ENCODE measurements at regions of chr6 and their contacts with region 1.

Region 1: GRCh38 chr6:26342106-26343004 is 22.6 kb upstream of the BTN3A2 start:
- DNase-seq: peak in 1 of 35 experiments; percentile 27
- ATAC-seq: peak; percentile 14 to 43 (median 28)
- H3K4me3 ChIP-seq: peak overlapping the region in 1 of 2 donors; percentile 33
- H3K4me3 Mint-ChIP-seq: peak overlapping the region; percentile 72 to 82 (median 77)
- H3K27ac ChIP-seq: no peak overlapping the region
- H3K27ac Mint-ChIP-seq: peak overlapping the region in 1 of 2 donors; percentile 59
- H3K4me1 ChIP-seq: peaks cover 0 to 14% of the 10 kb centered on the region in 2 experiments
- H3K4me1 Mint-ChIP-seq: peaks cover 4 to 11% (median 8%) of the 10 kb centered on the region in 3 donors
- H3K27me3 ChIP-seq: no peaks in the 10 kb centered on the region
- H3K27me3 Mint-ChIP-seq: peaks cover 0 to 1% of the 10 kb centered on the region in 2 donors

Region 2: GRCh38 chr6:26454631-26455030 is 112.3 kb after region 1 on chr6:
- CTCF ChIA-PET with region 1: no interaction called
- POLR2A ChIA-PET with region 1: interaction called in 1 of 2 experiments, 14 read pairs
- DNase-seq: no peak
- ATAC-seq: no peak
- H3K4me3 ChIP-seq: no peak overlapping the region
- H3K4me3 Mint-ChIP-seq: no peak overlapping the region
- H3K27ac ChIP-seq: no peak overlapping the region
- H3K27ac Mint-ChIP-seq: peak overlapping the region in 1 of 2 donors; percentile 30
- H3K4me1 ChIP-seq: peaks cover 5 to 14% of the 10 kb centered on the region in 2 experiments
- H3K4me1 Mint-ChIP-seq: peaks cover 34 to 57% (median 37%) of the 10 kb centered on the region in 3 donors
- H3K27me3 ChIP-seq: no peaks in the 10 kb centered on the region
- H3K27me3 Mint-ChIP-seq: no peaks in the 10 kb centered on the region